ENCODE measurements at regions of chr1 and their contacts with region 1.

Region 1: GRCh38 chr1:15966081-15966955 is 9.6 kb downstream of the ZBTB17 start:
- DNase-seq: peak; percentile 91 to 95 (median 92)
- H3K4me3 ChIP-seq: peak overlapping the region in 1 of 3 experiments; percentile 19
- H3K4me3 Mint-ChIP-seq: peak overlapping the region; percentile 9 to 14
- H3K27ac ChIP-seq: peak overlapping the region; percentile 81 to 93
- H3K27ac Mint-ChIP-seq: peak overlapping the region; percentile 81 to 97 (median 87)
- H3K4me1 ChIP-seq: peaks cover 23 to 38% of the 10 kb centered on the region in 2 donors
- H3K4me1 Mint-ChIP-seq: peaks cover 39% of the 10 kb centered on the region
- H3K27me3 ChIP-seq: no peaks in the 10 kb centered on the region
- H3K27me3 Mint-ChIP-seq: peaks cover 0 to 2% (median 0%) of the 10 kb centered on the region in 3 donors
- CTCF ChIP-seq: no peak

Region 2: GRCh38 chr1:15949453-15950245 is 16.7 kb before region 1 on chr1:
- intact Hi-C with region 1: loop called in 1 of 2 experiments (anchors 2 kb)
- DNase-seq: peak; percentile 97 to 100 (median 98)
- H3K4me3 ChIP-seq: peak overlapping the region in 1 of 3 experiments; percentile 32
- H3K4me3 Mint-ChIP-seq: peak overlapping the region; percentile 8 to 55
- H3K27ac ChIP-seq: peak overlapping the region; percentile 60 to 92
- H3K27ac Mint-ChIP-seq: peak overlapping the region; percentile 88 to 97 (median 94)
- H3K4me1 ChIP-seq: peaks cover 62 to 71% of the 10 kb centered on the region in 2 donors
- H3K4me1 Mint-ChIP-seq: peaks cover 66% of the 10 kb centered on the region
- H3K27me3 ChIP-seq: no peaks in the 10 kb centered on the region
- H3K27me3 Mint-ChIP-seq: no peaks in the 10 kb centered on the region
- CTCF ChIP-seq: no peak

Region 3: GRCh38 chr1:16032388-16033103 is 66.2 kb after region 1 on chr1:
- intact Hi-C with region 1: no loop called
- DNase-seq: peak; percentile 60 to 77 (median 70)
- H3K4me3 ChIP-seq: no peak overlapping the region
- H3K4me3 Mint-ChIP-seq: no peak overlapping the region
- H3K27ac ChIP-seq: no peak overlapping the region
- H3K27ac Mint-ChIP-seq: peak overlapping the region in 1 of 7 donors; percentile 40
- H3K4me1 ChIP-seq: no peaks in the 10 kb centered on the region
- H3K4me1 Mint-ChIP-seq: peaks cover 4% of the 10 kb centered on the region
- H3K27me3 ChIP-seq: peaks cover 0 to 5% of the 10 kb centered on the region in 2 donors
- H3K27me3 Mint-ChIP-seq: peaks cover 4 to 21% (median 8%) of the 10 kb centered on the region in 3 donors
- CTCF ChIP-seq: peak; percentile 91